ENCODE measurements at regions of chr3 and their contacts with region 1.

Region 1: GRCh38 chr3:148991194-148992026 is at the start of gene GYG1:
- DNase-seq: peak; percentile 92
- total RNA-seq, gene GYG1: 123 TPM

Region 2: DNA sequence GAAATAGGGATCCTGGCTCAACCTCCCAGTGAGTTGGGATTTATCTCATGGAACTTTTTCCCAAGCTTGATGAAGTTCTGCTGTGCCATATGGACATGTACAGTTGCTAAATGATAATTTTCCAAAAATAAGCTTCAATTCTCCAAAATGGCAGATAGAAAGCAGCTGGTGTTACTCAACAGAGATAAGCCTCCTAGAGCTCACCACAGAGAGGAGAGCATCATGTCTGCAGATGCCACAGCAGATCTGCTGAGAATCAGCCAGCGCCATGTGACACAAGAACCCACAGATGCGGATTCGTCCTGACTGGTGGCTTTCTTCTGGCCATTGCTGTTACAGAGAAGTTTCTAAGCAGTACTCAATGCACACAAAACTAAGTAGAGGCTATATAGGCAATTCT is 243.1 kb before region 1 on chr3:
- intact Hi-C with region 1: no loop called
- DNase-seq: no peak

Region 3: GRCh38 chr3:149058602-149059001 is 67.2 kb after region 1 on chr3:
- intact Hi-C with region 1: no loop called
- DNase-seq: no peak

Region 4: DNA sequence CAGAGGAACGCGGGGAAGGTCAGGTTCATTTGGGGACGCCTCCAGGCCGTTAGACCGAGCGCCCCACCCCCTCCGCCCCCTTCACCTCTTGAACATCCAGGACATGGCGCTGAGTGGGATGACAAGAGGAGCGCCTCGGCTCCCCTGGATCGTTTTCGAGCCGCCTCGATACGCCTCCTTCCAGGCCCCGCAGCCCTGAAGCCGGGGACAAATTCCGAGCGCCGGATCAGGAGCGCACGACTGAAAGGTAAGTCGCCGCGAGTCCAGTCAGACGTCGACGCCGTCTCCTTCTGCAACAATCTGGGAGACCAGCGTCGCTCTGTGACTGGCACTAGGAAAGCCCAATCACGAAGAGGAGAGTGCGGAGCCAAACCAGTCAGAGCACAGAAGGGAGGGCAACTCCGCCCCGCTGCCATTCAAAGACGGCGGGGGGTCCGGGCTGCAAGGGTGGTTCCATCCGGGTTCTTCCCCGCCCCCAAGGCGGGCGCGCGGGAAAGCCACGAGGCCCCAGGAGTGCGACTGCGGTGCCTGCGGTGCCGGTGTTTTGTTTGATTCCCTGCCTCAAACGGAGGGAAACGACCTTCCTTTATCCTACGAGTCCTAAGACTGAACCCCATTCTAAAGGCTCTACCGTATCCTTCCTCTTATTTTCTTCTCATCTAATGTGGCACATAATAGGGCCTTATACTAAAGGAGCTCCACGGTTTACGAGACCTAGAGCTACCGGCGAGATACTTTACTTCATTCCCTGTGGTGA is 95.0 kb after region 1 on chr3 and contains the start of gene HLTF:
- intact Hi-C with region 1: loop called (anchors 2 kb)
- DNase-seq: peak; percentile 95
- total RNA-seq, gene HLTF: 23.9 TPM

Region 5: DNA sequence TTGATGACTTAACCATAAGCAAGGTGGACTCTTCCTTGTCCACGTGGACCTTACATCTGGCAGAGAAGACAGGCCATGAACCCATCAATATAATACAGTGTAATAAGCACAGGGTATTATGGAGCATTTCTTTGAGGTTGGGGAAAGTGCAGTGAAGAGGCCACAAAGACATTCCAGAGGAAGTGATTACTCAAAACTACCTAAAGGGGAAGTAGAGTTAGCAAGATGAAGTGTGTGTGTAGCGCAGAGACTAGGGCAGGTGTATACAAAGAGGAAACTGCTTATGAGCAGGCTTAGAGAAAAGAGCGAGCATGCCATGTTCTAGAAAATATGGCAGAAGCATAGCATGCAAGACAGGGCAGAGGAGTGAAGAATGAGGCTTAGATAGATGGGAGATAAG is 212.3 kb after region 1 on chr3:
- intact Hi-C with region 1: no loop called
- DNase-seq: no peak